ENCODE measurements at regions of chr20 and their contacts with region 1.

Region 1: GRCh38 chr20:34516247-34517113 is at the start of gene DYNLRB1:
- DNase-seq: peak; percentile 94 to 97
- ATAC-seq: peak; percentile 83 to 92 (median 87)
- H3K4me3 ChIP-seq: peak within 1 kb of the TSS; percentile 98
- H3K4me3 Mint-ChIP-seq: peak within 1 kb of the TSS; percentile 98
- H3K27ac ChIP-seq: peak within 1 kb of the TSS; percentile 80
- H3K27ac Mint-ChIP-seq: peak within 1 kb of the TSS; percentile 94 to 98
- H3K4me1 ChIP-seq: peaks cover 22% of the 10 kb centered on the region
- H3K4me1 Mint-ChIP-seq: peaks cover 49 to 54% of the 10 kb centered on the region in 2 donors
- H3K27me3 ChIP-seq: no peaks in the 10 kb centered on the region
- H3K27me3 Mint-ChIP-seq: no peaks in the 10 kb centered on the region
- CTCF ChIP-seq: no peak
- total RNA-seq, gene DYNLRB1: 58.7 to 65.5 (median 61.4) TPM

Region 2: GRCh38 chr20:34302723-34303528 is 213.6 kb before region 1 on chr20 and contains the start of gene AHCY:
- intact Hi-C with region 1: loop called (anchors 1 kb)
- DNase-seq: peak; percentile 85 to 95
- ATAC-seq: peak; percentile 90 to 96 (median 91)
- H3K4me3 ChIP-seq: peak within 1 kb of the TSS; percentile 85
- H3K4me3 Mint-ChIP-seq: peak within 1 kb of the TSS; percentile 95
- H3K27ac ChIP-seq: peak within 1 kb of the TSS; percentile 68
- H3K27ac Mint-ChIP-seq: peak within 1 kb of the TSS; percentile 88
- H3K4me1 ChIP-seq: peaks cover 14% of the 10 kb centered on the region
- H3K4me1 Mint-ChIP-seq: peaks cover 0 to 4% of the 10 kb centered on the region in 2 donors
- H3K27me3 ChIP-seq: no peaks in the 10 kb centered on the region
- H3K27me3 Mint-ChIP-seq: no peaks in the 10 kb centered on the region
- CTCF ChIP-seq: peak; percentile 33
- total RNA-seq, gene AHCY: 7.1 to 8.3 (median 7.7) TPM

Measured in natural killer cell (primary cell).